ENCODE measurements at regions of chr15 and their contacts with region 1.

Region 1: DNA sequence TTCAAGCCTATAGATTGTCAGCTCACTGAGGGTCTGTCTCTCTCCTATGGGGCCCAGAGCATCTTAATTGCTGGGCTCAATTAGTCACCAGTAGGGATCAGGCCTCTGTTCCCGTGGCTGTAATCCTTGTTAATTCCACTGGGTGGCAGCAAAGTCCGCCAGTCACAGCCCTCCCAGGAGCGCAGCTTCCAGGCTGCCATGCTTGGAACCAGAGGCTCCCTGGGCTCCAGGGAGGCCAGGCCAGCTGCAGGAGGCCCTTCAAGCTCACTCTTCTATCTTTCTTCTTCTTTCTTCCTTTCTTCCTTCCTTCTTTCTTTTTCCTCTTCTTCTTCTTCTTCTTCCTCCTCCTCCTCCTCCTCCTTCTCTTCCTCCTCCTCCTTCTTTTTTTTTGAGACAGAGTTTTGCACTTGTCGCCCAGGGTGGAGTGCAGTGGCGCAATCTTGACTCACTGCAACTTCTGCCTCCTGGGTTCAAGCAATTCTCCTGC is 14.4 kb downstream of the RNU5B-1 start:
- DNase-seq: peak; percentile 88
- H3K4me3 Mint-ChIP-seq: no peak overlapping the region
- H3K27ac Mint-ChIP-seq: no peak overlapping the region
- H3K4me1 Mint-ChIP-seq: no peaks in the 10 kb centered on the region
- H3K27me3 Mint-ChIP-seq: peaks cover 56% of the 10 kb centered on the region
- CTCF ChIP-seq: peak; percentile 92

Region 2: GRCh38 chr15:65384895-65385858 is 66.3 kb after region 1 on chr15:
- CTCF ChIA-PET with region 1: interaction called, 55 read pairs
- intact Hi-C with region 1: loop called (anchors 1 kb)
- DNase-seq: peak; percentile 91
- H3K4me3 Mint-ChIP-seq: peak overlapping the region; percentile 53
- H3K27ac Mint-ChIP-seq: no peak overlapping the region
- H3K4me1 Mint-ChIP-seq: no peaks in the 10 kb centered on the region
- H3K27me3 Mint-ChIP-seq: peaks cover 82% of the 10 kb centered on the region
- CTCF ChIP-seq: peak; percentile 89

Region 3: DNA sequence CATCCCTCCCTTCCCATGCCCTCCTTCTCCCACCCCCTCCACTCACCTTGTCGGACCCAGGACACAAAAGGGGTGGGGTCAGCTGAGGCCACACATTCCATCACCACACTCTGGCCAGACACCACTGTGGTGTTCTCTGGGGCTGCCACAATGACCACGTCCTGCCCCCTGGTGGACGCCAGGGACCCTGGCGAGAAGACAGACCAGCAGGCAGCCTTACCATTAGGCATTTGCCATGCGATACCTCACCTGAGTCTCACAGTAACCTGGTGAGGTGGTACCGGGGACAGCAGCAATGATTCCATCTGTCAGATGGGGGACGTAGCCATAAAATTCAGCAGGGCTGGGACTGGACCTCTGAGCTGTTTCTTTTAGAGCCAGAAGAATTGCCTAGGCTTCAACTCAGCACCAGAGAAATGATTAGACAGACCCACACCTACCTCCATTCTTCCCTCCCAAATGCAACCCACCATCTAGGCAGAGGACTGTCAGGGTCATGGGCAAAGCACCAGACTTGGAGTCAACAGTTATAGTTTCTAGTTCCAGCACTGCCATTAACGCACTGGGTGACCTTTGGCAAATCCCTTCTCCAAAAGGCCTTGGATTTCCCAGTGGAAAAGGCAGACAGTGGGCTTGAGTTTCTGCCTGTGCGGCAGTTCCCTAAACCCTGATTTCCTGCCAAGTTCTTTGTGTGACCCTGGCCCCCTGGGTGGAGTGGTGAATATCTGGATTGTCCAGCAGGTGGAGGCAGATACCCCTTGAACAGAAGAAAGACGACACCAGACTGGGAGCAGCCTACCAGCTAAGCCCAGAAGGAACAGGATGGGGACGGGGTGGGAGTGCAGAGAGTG is 82.1 kb after region 1 on chr15:
- CTCF ChIA-PET with region 1: interaction called, 15 read pairs
- intact Hi-C with region 1: loop called (anchors 5 kb)
- DNase-seq: peak; percentile 89
- H3K4me3 Mint-ChIP-seq: no peak overlapping the region
- H3K27ac Mint-ChIP-seq: no peak overlapping the region
- H3K4me1 Mint-ChIP-seq: no peaks in the 10 kb centered on the region
- H3K27me3 Mint-ChIP-seq: peaks cover 74% of the 10 kb centered on the region
- CTCF ChIP-seq: peak; percentile 76

Region 4: GRCh38 chr15:65660927-65661326 is 342.0 kb after region 1 on chr15:
- CTCF ChIA-PET with region 1: no interaction called
- intact Hi-C with region 1: no loop called
- DNase-seq: no peak
- H3K4me3 Mint-ChIP-seq: no peak overlapping the region
- H3K27ac Mint-ChIP-seq: no peak overlapping the region
- H3K4me1 Mint-ChIP-seq: no peaks in the 10 kb centered on the region
- H3K27me3 Mint-ChIP-seq: no peaks in the 10 kb centered on the region
- CTCF ChIP-seq: no peak